ENCODE measurements at regions of chr12 and their contacts with region 1.

Region 1: DNA sequence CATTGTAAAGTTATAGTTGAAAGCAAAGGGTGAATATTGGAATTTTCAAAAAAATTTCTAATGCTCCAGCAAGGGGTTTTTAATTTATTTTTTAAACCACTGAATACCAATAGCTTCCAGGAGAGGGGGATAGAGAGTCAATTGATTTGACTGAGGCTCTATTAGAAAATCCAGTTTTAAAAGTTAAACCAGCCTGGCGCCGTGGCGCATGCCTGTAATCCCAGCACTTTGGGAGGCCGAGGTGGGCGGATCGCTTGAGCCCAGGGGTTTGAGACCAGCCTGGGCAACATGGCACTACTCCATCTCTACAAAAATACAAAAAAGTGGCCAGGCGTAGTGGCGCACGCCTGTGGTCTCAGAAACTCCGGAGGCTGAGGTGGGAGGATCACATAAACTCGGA is 150.1 kb downstream of the SLC38A4 start:
- DNase-seq: no peak
- H3K4me3 ChIP-seq: no peak overlapping the region
- H3K27ac ChIP-seq: no peak overlapping the region
- H3K4me1 ChIP-seq: peaks cover 7% of the 10 kb centered on the region
- H3K27me3 ChIP-seq: no peaks in the 10 kb centered on the region
- CTCF ChIP-seq: peak; percentile 77

Region 2: GRCh38 chr12:46124848-46125619 is 550.7 kb before region 1 on chr12:
- intact Hi-C with region 1: loop called (anchors 10 kb)
- DNase-seq: no peak
- H3K4me3 ChIP-seq: peak overlapping the region; percentile 25
- H3K27ac ChIP-seq: no peak overlapping the region
- H3K4me1 ChIP-seq: peaks cover 15% of the 10 kb centered on the region
- H3K27me3 ChIP-seq: no peaks in the 10 kb centered on the region
- CTCF ChIP-seq: peak; percentile 63

Region 3: DNA sequence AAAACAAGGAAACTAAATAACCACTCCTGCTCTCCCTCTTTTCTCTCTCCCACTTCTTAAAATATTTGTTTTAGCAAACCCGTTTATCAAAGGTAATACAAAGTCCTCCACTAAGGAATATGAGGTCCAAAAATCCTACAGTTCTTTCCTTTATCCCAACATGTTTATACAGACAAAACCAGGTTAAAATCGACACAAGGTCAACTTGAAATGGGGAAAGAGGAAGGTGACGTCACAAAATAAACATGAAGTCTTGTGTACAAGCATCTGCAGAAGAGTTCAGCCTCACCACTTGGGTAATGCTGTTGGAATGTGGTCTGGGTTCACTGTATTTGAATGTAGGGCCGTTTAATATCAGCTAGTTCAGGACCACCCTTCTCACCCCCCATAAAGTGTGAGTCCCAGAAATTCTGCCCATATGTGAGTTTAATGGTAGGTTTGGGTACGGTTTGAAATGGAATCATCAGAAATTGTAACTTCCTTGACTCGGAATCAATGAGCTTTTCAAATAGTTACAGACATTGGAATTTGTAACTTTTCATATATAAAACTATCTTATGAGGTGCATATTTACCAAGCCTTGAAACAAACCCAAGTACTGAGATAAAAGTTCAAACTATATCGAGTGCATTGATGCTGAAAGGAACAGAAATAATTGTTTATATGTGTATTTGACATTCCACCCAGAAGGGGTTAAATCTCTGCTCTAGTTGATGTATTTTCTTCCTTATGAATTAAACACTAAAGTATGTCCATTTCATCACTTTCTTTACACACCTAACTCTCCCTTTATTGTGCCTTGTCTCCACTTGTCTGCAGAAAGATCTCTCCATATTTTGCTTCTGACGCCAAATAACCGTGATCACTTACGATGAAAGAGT is 183.0 kb before region 1 on chr12:
- intact Hi-C with region 1: no loop called
- DNase-seq: no peak
- H3K4me3 ChIP-seq: no peak overlapping the region
- H3K27ac ChIP-seq: peak overlapping the region; percentile 74
- H3K4me1 ChIP-seq: peaks cover 54% of the 10 kb centered on the region
- H3K27me3 ChIP-seq: no peaks in the 10 kb centered on the region
- CTCF ChIP-seq: no peak

Region 4: GRCh38 chr12:46933947-46934346 is 258.2 kb after region 1 on chr12:
- intact Hi-C with region 1: loop called (anchors 5 kb)
- DNase-seq: no peak
- H3K4me3 ChIP-seq: no peak overlapping the region
- H3K27ac ChIP-seq: no peak overlapping the region
- H3K4me1 ChIP-seq: no peaks in the 10 kb centered on the region
- H3K27me3 ChIP-seq: no peaks in the 10 kb centered on the region
- CTCF ChIP-seq: peak; percentile 70

Measured in left ventricle myocardium inferior (tissue), 1 donor.